Activated naive CD4-positive, alpha-beta T cell treated with anti-CD3 and anti-CD28 coated beads for 36 hours (primary cell): ENCODE measurements at regions of chr7 and their contacts with region 1.

Region 1: DNA sequence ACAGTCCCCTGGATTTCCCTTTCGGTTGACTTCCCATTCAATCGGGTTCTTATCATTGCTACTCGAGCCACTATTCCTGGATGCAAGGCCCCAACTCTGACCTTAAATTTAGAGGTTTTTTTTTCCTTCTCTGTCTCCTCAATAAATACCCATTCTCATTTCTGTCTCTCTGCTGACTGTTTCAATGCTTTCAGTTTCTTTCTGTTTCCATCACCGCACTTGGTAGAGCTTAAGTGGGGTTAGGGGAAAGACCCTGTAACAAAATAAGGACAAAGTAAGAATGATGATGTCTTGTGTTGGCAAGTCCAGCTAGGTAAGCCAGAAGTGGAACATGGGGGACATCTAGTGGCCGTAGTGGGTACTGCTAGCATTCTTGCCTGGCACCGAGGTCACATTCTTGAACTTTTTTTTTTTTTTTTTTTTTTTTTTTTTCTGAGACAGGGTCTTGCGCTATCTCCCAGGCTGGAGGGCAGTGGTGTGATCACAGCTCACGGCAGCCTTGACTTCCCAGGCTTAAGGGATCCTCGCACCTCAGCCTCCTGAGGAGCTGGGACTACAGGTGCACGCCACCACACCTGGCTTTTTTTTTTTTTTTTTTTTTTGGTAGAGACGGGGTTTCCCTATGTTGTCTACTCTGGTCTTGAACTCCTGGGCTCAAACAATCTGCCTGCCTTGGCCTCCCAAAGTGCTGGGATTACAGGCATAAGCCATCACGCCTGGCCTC is 40.3 kb downstream of the ZC3HC1 start:
- DNase-seq: peak; percentile 98
- H3K4me3 Mint-ChIP-seq: no peak overlapping the region
- H3K27ac Mint-ChIP-seq: peak overlapping the region; percentile 64
- H3K4me1 Mint-ChIP-seq: peaks cover 13% of the 10 kb centered on the region
- H3K27me3 Mint-ChIP-seq: no peaks in the 10 kb centered on the region

Region 2: GRCh38 chr7:129343099-129343700 is 667.7 kb before region 1 on chr7:
- CTCF ChIA-PET with region 1: no interaction called
- intact Hi-C with region 1: loop called (anchors 1 kb)
- DNase-seq: peak; percentile 39
- H3K4me3 Mint-ChIP-seq: no peak overlapping the region
- H3K27ac Mint-ChIP-seq: no peak overlapping the region
- H3K4me1 Mint-ChIP-seq: peaks cover 32% of the 10 kb centered on the region
- H3K27me3 Mint-ChIP-seq: no peaks in the 10 kb centered on the region

Region 3: GRCh38 chr7:129502376-129502776 is 508.5 kb before region 1 on chr7 and contains the start of gene SMKR1:
- CTCF ChIA-PET with region 1: no interaction called
- intact Hi-C with region 1: loop called (anchors 5 kb)
- DNase-seq: peak; percentile 86
- H3K4me3 Mint-ChIP-seq: peak within 1 kb of the TSS; percentile 75
- H3K27ac Mint-ChIP-seq: no peak within 1 kb of the TSS
- H3K4me1 Mint-ChIP-seq: peaks cover 9% of the 10 kb centered on the region
- H3K27me3 Mint-ChIP-seq: no peaks in the 10 kb centered on the region
- total RNA-seq, gene SMKR1: 0.99 to 1.2 TPM

Region 4: DNA sequence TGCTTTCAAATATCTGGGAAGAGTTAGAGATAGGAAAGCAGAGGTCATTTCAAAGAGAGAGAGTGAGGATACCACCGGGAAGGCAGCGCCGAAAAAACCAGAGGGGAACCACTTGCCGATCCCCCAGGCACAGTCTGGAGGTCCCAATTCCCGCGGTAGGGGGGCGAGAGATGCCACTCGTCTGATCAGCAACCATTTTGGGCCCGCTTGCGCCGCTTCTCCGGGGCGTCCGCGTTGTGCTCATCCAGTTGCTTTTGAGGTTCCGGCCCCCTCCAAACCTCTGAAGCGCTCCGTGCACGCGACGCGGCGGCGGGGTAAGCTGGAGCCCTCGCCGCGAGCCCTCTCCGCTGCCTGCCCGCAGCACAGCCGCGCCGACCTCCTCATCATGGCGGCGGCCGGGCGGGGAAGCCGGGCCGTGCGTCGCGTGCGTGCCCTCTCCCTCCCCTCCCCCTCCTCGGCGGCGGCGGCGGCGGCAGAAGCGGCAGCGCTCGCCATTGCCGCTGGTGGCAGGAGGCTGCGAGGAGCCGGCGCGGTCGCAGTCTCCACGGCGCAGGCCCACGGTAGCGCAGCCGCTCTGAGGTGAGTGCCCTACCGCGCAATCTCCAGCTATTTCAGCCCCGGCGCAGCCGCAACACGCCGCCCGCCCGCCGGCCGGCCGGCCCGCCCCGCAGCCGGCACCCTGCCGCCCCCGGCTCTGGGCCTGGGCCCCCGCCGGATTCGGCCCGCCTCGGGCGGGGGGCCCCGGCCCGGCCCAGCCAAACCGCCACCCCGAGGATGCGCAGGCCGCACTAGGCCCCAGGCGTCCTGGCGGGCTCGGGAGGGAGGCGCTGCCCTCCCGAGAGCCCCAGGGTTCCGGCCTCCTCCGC is 399.4 kb before region 1 on chr7 and contains the start of gene NRF1:
- CTCF ChIA-PET with region 1: interaction called, 3 read pairs
- intact Hi-C with region 1: loop called (anchors 1 kb)
- DNase-seq: peak; percentile 91
- H3K4me3 Mint-ChIP-seq: peak within 1 kb of the TSS; percentile 97
- H3K27ac Mint-ChIP-seq: peak within 1 kb of the TSS; percentile 98
- H3K4me1 Mint-ChIP-seq: peaks cover 56% of the 10 kb centered on the region
- H3K27me3 Mint-ChIP-seq: no peaks in the 10 kb centered on the region
- total RNA-seq, gene NRF1: 18.5 to 21.5 TPM

Region 5: GRCh38 chr7:129825496-129826267 is 185.2 kb before region 1 on chr7:
- CTCF ChIA-PET with region 1: interaction called, 49 read pairs
- intact Hi-C with region 1: loop called (anchors 1 kb)
- DNase-seq: peak; percentile 89
- H3K4me3 Mint-ChIP-seq: peak overlapping the region; percentile 90
- H3K27ac Mint-ChIP-seq: no peak overlapping the region
- H3K4me1 Mint-ChIP-seq: peaks cover 21% of the 10 kb centered on the region
- H3K27me3 Mint-ChIP-seq: no peaks in the 10 kb centered on the region

Region 6: DNA sequence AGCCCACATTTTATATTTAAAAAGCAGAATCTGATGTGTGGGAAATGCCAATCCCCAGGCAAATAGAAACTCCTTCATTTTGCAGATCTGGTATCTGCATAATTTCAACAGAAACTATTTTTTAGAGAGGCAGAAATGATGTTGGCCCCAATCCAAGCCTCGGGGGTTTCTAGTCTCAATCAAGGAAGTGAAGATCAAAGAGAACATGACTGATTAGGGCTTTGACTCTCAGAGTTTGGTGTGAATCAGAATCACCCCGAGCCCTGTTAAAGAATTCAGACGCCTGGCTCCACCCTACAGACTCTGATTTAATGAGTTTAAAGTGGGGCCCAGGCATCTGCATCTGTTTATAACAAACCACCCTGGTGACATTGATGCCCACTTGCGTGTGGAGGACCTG is 21.4 kb before region 1 on chr7:
- CTCF ChIA-PET with region 1: interaction called, 3 read pairs
- intact Hi-C with region 1: loop called (anchors 1 kb)
- DNase-seq: peak; percentile 90
- H3K4me3 Mint-ChIP-seq: no peak overlapping the region
- H3K27ac Mint-ChIP-seq: no peak overlapping the region
- H3K4me1 Mint-ChIP-seq: peaks cover 13% of the 10 kb centered on the region
- H3K27me3 Mint-ChIP-seq: no peaks in the 10 kb centered on the region

Region 7: GRCh38 chr7:130668257-130669084 is 657.6 kb after region 1 on chr7 and contains the start of gene COPG2:
- CTCF ChIA-PET with region 1: no interaction called
- intact Hi-C with region 1: no loop called
- DNase-seq: peak; percentile 74
- H3K4me3 Mint-ChIP-seq: peak within 1 kb of the TSS; percentile 82
- H3K27ac Mint-ChIP-seq: peak within 1 kb of the TSS; percentile 24
- H3K4me1 Mint-ChIP-seq: peaks cover 14% of the 10 kb centered on the region
- H3K27me3 Mint-ChIP-seq: peaks cover 7% of the 10 kb centered on the region
- total RNA-seq, gene COPG2: 32.7 to 35.7 TPM